Posterior cingulate gyrus (tissue), 11 donors: ENCODE measurements at regions of chr10 and their contacts with region 1.

Region 1: GRCh38 chr10:74176380-74177139 is 25.5 kb downstream of the ADK start:
- DNase-seq: peak; percentile 86 to 98 (median 92)

Region 2: GRCh38 chr10:74151056-74151878 is 25.3 kb before region 1 on chr10 and contains the start of gene ADK:
- intact Hi-C with region 1: loop called (anchors 2 kb)
- DNase-seq: peak; percentile 97 to 100 (median 99)